Activated B cell treated with CpG ODN at 0.5 μM for 24 hours (primary cell): ENCODE measurements at regions of chr14 and their contacts with region 1.

Region 1: DNA sequence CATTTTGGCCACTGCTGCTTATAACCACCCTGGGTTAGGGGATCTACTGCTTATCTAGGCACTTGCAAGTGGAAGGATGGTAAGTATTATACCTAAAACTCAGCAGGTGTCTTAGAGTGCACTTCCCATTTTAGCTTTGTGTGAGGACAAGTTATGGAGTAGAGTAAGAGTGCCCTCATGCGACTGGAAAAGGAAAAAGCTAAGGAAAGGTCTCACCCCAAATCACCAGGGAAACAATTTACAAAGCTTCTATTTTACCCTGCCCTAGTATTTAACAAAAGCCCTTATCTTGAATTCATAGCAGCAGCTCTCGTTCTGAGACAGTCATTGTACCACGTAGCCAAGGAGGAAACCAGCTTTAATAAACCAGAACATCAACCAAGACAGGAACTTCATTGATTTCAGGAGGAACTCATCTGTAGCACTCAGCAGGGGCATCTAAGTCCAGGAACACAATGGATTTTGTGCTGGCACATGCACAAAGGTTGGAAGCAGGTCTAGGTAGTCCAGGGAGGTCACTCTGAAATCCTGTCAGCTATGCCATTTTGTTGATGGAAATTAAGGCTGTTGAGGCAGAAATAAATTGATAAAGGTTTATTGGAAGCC is 2.9 kb downstream of the RDH12 start:
- DNase-seq: no peak
- ATAC-seq: peak; percentile 81
- H3K4me3 Mint-ChIP-seq: no peak overlapping the region
- H3K27ac Mint-ChIP-seq: no peak overlapping the region
- H3K4me1 Mint-ChIP-seq: no peaks in the 10 kb centered on the region
- H3K27me3 Mint-ChIP-seq: no peaks in the 10 kb centered on the region
- CTCF ChIP-seq: no peak

Region 2: DNA sequence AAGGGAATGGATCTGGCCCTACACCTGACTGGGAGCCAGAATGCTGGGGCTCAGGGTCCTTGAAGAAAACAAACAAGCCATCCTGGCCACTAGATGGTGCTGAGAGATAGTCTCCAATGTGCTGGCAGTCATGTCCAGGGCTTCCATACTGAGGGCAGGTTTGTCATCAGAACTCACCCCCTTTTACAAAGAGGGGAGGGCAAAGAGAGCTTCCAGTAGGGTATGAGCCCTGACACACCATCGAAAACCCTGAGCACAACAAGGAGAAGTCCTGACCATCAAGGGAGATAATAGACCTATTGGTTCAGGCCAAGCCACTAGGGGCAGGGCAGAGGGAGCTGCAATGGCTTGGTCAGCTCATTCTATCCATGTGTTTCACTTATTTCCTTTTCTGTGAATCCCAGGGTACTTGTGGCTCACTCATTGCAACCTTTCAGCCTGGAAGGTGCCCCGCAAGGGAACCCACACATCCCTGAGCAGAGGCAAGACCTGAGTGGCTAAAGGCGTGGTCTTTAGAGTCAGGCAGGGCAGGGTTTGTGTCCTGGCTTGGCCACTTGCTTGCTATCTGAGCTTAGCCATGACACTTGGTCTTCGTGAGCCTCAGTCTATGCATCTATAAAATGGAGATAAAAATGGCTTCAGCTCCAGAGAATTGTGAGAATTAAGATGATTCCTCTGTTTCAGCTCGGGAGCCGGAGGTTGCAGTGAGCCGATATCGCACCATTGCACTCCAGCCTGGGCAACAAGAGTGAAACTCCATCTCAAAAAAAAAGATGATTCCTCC is 177.7 kb before region 1 on chr14:
- CTCF ChIA-PET with region 1: interaction called, 18 read pairs
- POLR2A ChIA-PET with region 1: no interaction called
- intact Hi-C with region 1: loop called (anchors 2 kb)
- DNase-seq: no peak
- ATAC-seq: peak; percentile 77
- H3K4me3 Mint-ChIP-seq: no peak overlapping the region
- H3K27ac Mint-ChIP-seq: no peak overlapping the region
- H3K4me1 Mint-ChIP-seq: peaks cover 3% of the 10 kb centered on the region
- H3K27me3 Mint-ChIP-seq: peaks cover 51% of the 10 kb centered on the region
- CTCF ChIP-seq: peak; percentile 20

Region 3: GRCh38 chr14:67583711-67584644 is 120.6 kb before region 1 on chr14:
- CTCF ChIA-PET with region 1: interaction called, 180 read pairs
- POLR2A ChIA-PET with region 1: interaction called, 8 read pairs
- intact Hi-C with region 1: loop called (anchors 1 kb)
- DNase-seq: no peak
- ATAC-seq: peak; percentile 80
- H3K4me3 Mint-ChIP-seq: no peak overlapping the region
- H3K27ac Mint-ChIP-seq: no peak overlapping the region
- H3K4me1 Mint-ChIP-seq: peaks cover 5% of the 10 kb centered on the region
- H3K27me3 Mint-ChIP-seq: no peaks in the 10 kb centered on the region
- CTCF ChIP-seq: peak; percentile 46

Region 4: DNA sequence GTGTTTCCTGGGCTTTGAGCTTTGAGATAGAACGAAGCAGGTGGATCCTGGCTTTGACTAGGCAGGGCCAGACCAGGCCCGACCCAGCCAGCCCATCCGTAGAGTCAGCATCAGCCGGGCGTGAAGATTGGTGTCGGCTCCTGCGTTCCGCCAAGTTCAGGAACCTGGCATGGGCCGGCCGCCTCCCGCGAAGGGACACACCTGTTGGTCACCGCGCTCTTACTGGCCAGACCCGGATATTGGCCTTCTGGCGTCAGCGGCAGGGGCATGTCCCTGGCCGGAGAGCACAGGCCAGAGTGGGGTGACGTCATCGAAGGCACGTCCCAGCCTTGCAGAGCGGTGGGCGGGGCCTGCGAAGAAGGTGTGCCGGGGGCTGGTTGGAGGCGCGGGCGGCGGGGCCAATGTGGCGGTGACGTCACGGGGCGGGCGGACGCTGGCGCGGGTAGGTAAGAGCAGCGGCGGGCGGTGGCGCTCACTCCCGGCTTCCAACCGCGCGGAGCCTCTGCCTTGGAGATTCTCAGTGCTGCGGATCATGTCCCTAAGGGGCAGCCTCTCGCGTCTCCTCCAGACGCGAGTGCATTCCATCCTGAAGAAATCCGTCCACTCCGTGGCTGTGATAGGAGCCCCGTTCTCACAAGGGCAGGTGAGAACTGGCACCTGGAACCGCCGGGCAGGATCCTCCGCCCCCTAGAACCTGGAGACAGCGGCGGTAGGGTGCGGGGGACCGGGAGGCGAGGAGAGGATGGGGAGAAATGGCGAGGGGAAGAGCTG is 85.0 kb before region 1 on chr14 and contains the start of gene ARG2:
- CTCF ChIA-PET with region 1: interaction called, 33 read pairs
- POLR2A ChIA-PET with region 1: no interaction called
- intact Hi-C with region 1: loop called (anchors 1 kb)
- DNase-seq: peak; percentile 95
- ATAC-seq: peak; percentile 94
- H3K4me3 Mint-ChIP-seq: peak within 1 kb of the TSS; percentile 88
- H3K27ac Mint-ChIP-seq: peak within 1 kb of the TSS; percentile 79
- H3K4me1 Mint-ChIP-seq: peaks cover 25% of the 10 kb centered on the region
- H3K27me3 Mint-ChIP-seq: no peaks in the 10 kb centered on the region
- CTCF ChIP-seq: no peak
- total RNA-seq, gene ARG2: 0.40 and 0.46 TPM in 2 replicates

Region 5: GRCh38 chr14:67666750-67667449 is 37.7 kb before region 1 on chr14:
- CTCF ChIA-PET with region 1: interaction called, 24 read pairs
- POLR2A ChIA-PET with region 1: no interaction called
- intact Hi-C with region 1: loop called (anchors 5 kb)
- DNase-seq: no peak
- ATAC-seq: peak; percentile 87
- H3K4me3 Mint-ChIP-seq: peak overlapping the region; percentile 44
- H3K27ac Mint-ChIP-seq: peak overlapping the region; percentile 68
- H3K4me1 Mint-ChIP-seq: peaks cover 58% of the 10 kb centered on the region
- H3K27me3 Mint-ChIP-seq: no peaks in the 10 kb centered on the region
- CTCF ChIP-seq: no peak